Panc1 (cell line): ENCODE measurements at regions of chr16 and their contacts with region 1.

Region 1: DNA sequence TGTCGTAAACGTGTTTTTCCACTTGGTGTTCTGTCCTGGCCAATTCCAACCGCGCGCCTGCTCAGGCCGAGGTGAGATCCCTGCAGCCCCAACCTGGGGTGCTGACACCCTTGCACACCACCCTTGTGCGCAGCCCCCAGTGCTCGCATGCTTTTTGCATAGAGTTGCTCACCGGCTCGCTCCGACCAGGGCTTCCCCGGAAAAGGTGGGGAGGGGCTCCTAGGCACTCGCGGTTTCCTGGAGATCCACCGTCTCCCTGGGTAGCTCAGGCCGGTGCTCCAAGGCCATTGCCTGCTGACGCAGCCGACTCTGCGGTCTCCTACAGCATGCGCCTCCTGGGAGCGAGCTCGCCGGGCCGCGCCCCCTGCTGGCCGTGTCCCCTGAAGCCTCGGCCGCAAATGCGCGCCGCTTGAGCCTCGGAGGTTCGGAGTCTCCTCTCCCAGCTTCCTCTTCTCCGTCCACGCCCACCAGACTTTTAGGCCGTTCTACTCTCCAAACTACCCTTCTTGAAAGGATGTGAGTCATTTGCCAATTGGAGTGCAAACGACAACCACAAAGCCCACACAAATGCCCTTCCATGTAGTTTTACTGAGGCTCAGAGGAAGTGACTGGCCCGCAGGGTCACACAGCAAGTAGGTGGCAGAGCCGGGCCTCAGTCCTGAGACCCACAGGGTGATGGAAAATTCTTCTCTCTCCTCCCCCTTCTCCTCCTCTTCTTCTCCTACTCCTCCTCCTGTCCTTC is 7.2 kb upstream of the PDP2 start:
- DNase-seq: peak; percentile 86
- ATAC-seq: peak; percentile 93
- H3K4me3 ChIP-seq: peak overlapping the region; percentile 37 to 59
- H3K27ac ChIP-seq: peak overlapping the region; percentile 82
- H3K4me1 ChIP-seq: peaks cover 14% of the 10 kb centered on the region
- H3K27me3 ChIP-seq: no peaks in the 10 kb centered on the region
- CTCF ChIP-seq: peak; percentile 92

Region 2: DNA sequence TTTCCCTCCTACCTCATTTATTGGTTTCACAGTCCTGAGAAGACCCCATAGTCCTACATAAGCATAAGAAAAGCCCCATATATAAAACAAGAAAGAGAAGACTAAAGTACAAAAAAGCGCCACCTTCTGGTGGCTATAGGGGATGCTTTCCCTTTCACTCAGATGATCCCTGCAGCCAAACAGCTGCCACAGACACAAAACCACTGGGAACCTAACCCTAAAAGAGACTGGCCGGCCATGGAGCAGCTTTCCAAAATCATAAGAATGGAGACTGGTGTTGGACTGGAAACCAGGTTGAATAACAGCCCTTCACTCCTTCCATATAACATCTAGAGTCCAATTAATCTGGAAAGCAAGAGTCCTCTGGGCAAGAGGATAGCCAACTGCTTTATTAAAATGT is 133.1 kb before region 1 on chr16:
- CTCF ChIA-PET with region 1: interaction called, 9 read pairs
- POLR2A ChIA-PET with region 1: interaction called, 12 read pairs
- in situ Hi-C with region 1: no loop called
- intact Hi-C with region 1: no loop called
- DNase-seq: no peak
- ATAC-seq: 0 out of 2 replicates have a peak, but pooled peaks have one; percentile 56
- H3K4me3 ChIP-seq: no peak overlapping the region
- H3K27ac ChIP-seq: no peak overlapping the region
- H3K4me1 ChIP-seq: peaks cover 5% of the 10 kb centered on the region; the same call in 1 of the 2 replicates
- H3K27me3 ChIP-seq: no peaks in the 10 kb centered on the region
- CTCF ChIP-seq: peak; percentile 73

Region 3: DNA sequence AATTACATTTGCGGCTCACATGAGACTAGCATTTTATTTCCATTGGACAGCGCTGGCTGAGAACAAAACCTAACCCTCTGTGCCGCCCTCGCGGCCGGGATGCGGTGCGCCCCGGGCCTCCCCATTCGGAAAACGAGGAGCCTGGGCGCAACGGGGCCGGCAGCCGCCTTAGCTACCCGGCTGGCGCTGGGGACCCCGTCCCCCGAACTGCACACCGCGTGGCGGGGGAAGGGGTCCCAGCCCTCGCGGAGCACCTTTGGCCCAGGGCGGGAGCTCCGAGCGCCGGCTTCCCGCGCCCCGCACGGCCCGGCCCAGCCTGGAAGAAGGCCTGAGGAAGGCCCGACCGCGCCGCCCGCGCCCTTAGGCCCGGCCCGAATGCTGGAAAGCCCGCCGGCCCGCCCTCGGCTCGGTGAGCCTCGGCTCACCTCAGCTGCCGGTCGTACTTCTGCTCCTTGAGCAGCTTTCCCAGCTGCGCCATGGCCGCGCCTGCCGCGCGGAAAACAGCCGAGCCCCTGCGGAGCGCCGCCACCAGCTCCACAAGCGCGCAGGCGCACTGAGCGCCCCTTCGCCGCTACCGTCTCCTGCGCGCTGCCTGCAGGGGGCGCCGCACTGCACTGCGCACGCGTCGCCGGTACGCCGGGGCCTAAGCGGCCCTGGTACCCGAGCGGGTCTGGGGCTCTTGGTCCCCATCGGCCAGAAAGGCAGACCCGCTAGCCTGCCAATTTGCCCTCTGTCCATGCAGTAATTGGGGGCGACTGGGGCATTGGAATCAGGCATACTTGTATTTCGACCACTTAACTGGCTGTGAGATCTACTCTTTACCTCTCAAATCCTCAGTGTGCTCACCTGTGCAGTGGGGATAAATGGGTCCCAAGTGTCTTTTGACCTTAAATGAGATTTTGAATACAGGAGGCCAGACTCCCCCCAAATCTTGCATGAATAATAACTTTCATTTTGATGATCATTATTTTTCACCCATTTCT is 42.4 kb before region 1 on chr16 and contains the start of gene NAE1:
- CTCF ChIA-PET with region 1: interaction called, 28 read pairs
- POLR2A ChIA-PET with region 1: no interaction called
- in situ Hi-C with region 1: no loop called
- intact Hi-C with region 1: loop called (anchors 5 kb)
- DNase-seq: peak; percentile 50
- ATAC-seq: peak; percentile 96
- H3K4me3 ChIP-seq: peak within 1 kb of the TSS; percentile 73 to 74
- H3K27ac ChIP-seq: peak within 1 kb of the TSS; percentile 80
- H3K4me1 ChIP-seq: peaks cover 6% of the 10 kb centered on the region; the same call in 1 of the 2 replicates
- H3K27me3 ChIP-seq: no peaks in the 10 kb centered on the region
- CTCF ChIP-seq: peak; percentile 97
- total RNA-seq, gene NAE1: 70.7 TPM

Region 4: GRCh38 chr16:66858740-66859396 is 14.2 kb before region 1 on chr16:
- CTCF ChIA-PET with region 1: interaction called, 11 read pairs
- POLR2A ChIA-PET with region 1: interaction called, 10 read pairs
- in situ Hi-C with region 1: no loop called
- intact Hi-C with region 1: no loop called
- DNase-seq: no peak
- ATAC-seq: peak; percentile 88
- H3K4me3 ChIP-seq: no peak overlapping the region
- H3K27ac ChIP-seq: no peak overlapping the region
- H3K4me1 ChIP-seq: no peaks in the 10 kb centered on the region
- H3K27me3 ChIP-seq: no peaks in the 10 kb centered on the region
- CTCF ChIP-seq: no peak

Region 5: GRCh38 chr16:67206838-67207115 is 333.7 kb after region 1 on chr16:
- CTCF ChIA-PET with region 1: interaction called, 13 read pairs
- POLR2A ChIA-PET with region 1: no interaction called
- in situ Hi-C with region 1: no loop called
- intact Hi-C with region 1: no loop called
- DNase-seq: no peak
- ATAC-seq: peak; percentile 20
- H3K4me3 ChIP-seq: no peak overlapping the region
- H3K27ac ChIP-seq: no peak overlapping the region
- H3K4me1 ChIP-seq: peaks cover 18% of the 10 kb centered on the region
- H3K27me3 ChIP-seq: no peaks in the 10 kb centered on the region
- CTCF ChIP-seq: no peak